ENCODE measurements at regions of chr6 and their contacts with region 1.

Region 1: DNA sequence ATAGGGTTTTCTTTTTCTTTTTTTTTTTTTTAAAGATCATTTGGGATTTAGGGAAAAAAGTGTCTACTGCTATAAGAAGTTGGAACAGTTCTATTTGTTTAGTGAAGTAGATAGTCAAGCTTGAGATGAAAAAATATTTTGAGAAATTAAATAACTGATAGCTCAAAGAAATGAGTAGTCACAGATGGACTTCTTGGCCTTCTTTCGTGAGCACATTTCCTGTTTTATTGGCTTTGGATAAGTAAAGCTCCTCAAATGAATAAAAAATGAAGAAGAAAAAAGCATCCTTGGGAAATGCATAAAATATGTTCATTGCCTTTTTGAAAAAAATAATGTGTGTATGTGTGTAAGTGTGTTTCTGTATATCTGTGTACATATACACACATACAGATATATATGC is 515.9 kb downstream of the GRIK2 start:
- DNase-seq: no peak
- H3K4me3 Mint-ChIP-seq: no peak overlapping the region
- H3K27ac Mint-ChIP-seq: no peak overlapping the region
- H3K4me1 Mint-ChIP-seq: no peaks in the 10 kb centered on the region
- H3K27me3 Mint-ChIP-seq: no peaks in the 10 kb centered on the region
- CTCF ChIP-seq: no peak

Region 2: GRCh38 chr6:101887532-101887931 is 21.8 kb before region 1 on chr6:
- CTCF ChIA-PET with region 1: interaction called, 11 read pairs
- intact Hi-C with region 1: no loop called
- DNase-seq: no peak
- H3K4me3 Mint-ChIP-seq: no peak overlapping the region
- H3K27ac Mint-ChIP-seq: no peak overlapping the region
- H3K4me1 Mint-ChIP-seq: peaks cover 12% of the 10 kb centered on the region
- H3K27me3 Mint-ChIP-seq: no peaks in the 10 kb centered on the region
- CTCF ChIP-seq: no peak